Lower leg skin (tissue), 4 donors: ENCODE measurements at regions of chr3 and their contacts with region 1.

Region 1: GRCh38 chr3:149514471-149514870 is 40.0 kb downstream of the TM4SF4 start:
- DNase-seq: no peak
- H3K4me3 ChIP-seq: no peak overlapping the region
- CTCF ChIP-seq: no peak
- POLR2A ChIP-seq: no peak

Region 2: GRCh38 chr3:148190441-148190990 is 1324.0 kb before region 1 on chr3:
- intact Hi-C with region 1: no loop called
- DNase-seq: no peak
- H3K4me3 ChIP-seq: no peak overlapping the region
- CTCF ChIP-seq: no peak
- POLR2A ChIP-seq: no peak

Region 3: GRCh38 chr3:149273096-149273751 is 241.2 kb before region 1 on chr3:
- intact Hi-C with region 1: no loop called
- DNase-seq: peak in 1 of 2 donors; percentile 37
- H3K4me3 ChIP-seq: no peak overlapping the region
- CTCF ChIP-seq: peak in 1 of 3 donors; percentile 97
- POLR2A ChIP-seq: no peak

Region 4: DNA sequence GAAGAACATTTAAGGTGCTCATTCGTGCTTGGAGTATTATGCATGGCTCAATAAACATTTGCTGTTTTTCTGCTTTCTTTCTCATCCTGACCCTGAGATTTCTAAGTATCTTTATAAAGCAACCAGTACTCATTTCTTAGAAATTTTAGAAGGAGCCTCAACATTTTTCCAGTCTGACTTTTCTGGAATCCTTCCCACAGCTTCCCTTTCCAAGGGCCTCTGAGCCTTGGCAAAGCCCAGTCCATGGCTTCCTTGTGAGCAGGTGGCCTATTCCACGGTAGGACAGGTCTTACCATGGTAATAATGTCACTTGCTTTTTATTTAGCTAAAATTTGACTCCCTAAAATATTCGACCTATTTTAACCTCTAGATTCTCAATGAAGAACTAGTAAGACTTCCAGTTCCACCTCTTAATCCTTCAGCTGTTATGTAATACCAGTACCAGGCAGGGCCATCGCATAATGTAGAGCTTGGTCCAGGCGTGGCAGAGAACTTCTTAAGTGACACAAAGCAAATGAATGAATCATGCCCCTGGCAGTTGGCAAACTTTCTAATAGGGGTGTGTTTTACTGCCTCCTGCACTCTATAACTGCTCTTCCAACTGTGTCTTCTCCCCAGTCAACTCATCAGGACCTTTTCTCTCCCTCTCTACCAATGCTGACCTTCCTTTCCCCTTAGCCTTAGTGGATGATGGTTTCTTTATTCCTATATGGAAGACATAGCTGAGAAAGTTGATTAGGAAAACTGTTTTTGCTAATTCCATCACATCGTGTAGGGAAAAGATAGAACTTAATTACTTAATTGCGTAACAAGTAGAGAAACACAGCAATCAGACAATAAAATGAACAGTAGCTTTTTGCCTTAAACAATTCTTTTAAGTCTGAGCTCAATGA is 40.9 kb before region 1 on chr3:
- intact Hi-C with region 1: no loop called
- DNase-seq: peak in 1 of 2 donors; percentile 69
- H3K4me3 ChIP-seq: no peak overlapping the region
- CTCF ChIP-seq: no peak
- POLR2A ChIP-seq: no peak

Region 5: GRCh38 chr3:149717391-149718056 is 203.1 kb after region 1 on chr3:
- intact Hi-C with region 1: loop called (anchors 1 kb)
- DNase-seq: peak in 1 of 2 donors; percentile 60
- H3K4me3 ChIP-seq: no peak overlapping the region
- CTCF ChIP-seq: peak in 1 of 3 donors; percentile 42
- POLR2A ChIP-seq: no peak